Activated B cell treated with CpG ODN at 0.5 μM for 24 hours (primary cell): ENCODE measurements at regions of chr14 and their contacts with region 1.

Region 1: GRCh38 chr14:65958664-65959562 is 527.3 kb upstream of the CCDC196 start:
- DNase-seq: no peak
- ATAC-seq: peak; percentile 57
- H3K4me3 Mint-ChIP-seq: no peak overlapping the region
- H3K27ac Mint-ChIP-seq: no peak overlapping the region
- H3K4me1 Mint-ChIP-seq: no peaks in the 10 kb centered on the region
- H3K27me3 Mint-ChIP-seq: peaks cover 20% of the 10 kb centered on the region
- CTCF ChIP-seq: no peak

Region 2: GRCh38 chr14:64971943-64972791 is 986.7 kb before region 1 on chr14 and contains the start of gene RAB15:
- CTCF ChIA-PET with region 1: no interaction called
- POLR2A ChIA-PET with region 1: no interaction called
- intact Hi-C with region 1: no loop called
- DNase-seq: peak; percentile 44
- ATAC-seq: peak; percentile 75
- H3K4me3 Mint-ChIP-seq: peak within 1 kb of the TSS; percentile 83
- H3K27ac Mint-ChIP-seq: no peak within 1 kb of the TSS
- H3K4me1 Mint-ChIP-seq: peaks cover 9% of the 10 kb centered on the region
- H3K27me3 Mint-ChIP-seq: peaks cover 3% of the 10 kb centered on the region
- CTCF ChIP-seq: no peak
- total RNA-seq, gene RAB15: 0.34 and 0.47 TPM in 2 replicates

Region 3: GRCh38 chr14:65281991-65282895 is 676.7 kb before region 1 on chr14:
- CTCF ChIA-PET with region 1: interaction called, 3 read pairs
- POLR2A ChIA-PET with region 1: no interaction called
- intact Hi-C with region 1: loop called (anchors 10 kb)
- DNase-seq: no peak
- ATAC-seq: peak; percentile 13
- H3K4me3 Mint-ChIP-seq: peak overlapping the region; percentile 79
- H3K27ac Mint-ChIP-seq: peak overlapping the region; percentile 93
- H3K4me1 Mint-ChIP-seq: peaks cover 57% of the 10 kb centered on the region
- H3K27me3 Mint-ChIP-seq: no peaks in the 10 kb centered on the region
- CTCF ChIP-seq: no peak

Region 4: GRCh38 chr14:65824285-65824977 is 134.5 kb before region 1 on chr14:
- CTCF ChIA-PET with region 1: interaction called, 7 read pairs
- POLR2A ChIA-PET with region 1: no interaction called
- intact Hi-C with region 1: loop called (anchors 2 kb)
- DNase-seq: no peak
- ATAC-seq: peak; percentile 99
- H3K4me3 Mint-ChIP-seq: no peak overlapping the region
- H3K27ac Mint-ChIP-seq: no peak overlapping the region
- H3K4me1 Mint-ChIP-seq: peaks cover 1% of the 10 kb centered on the region
- H3K27me3 Mint-ChIP-seq: peaks cover 5% of the 10 kb centered on the region
- CTCF ChIP-seq: peak; percentile 82